ENCODE measurements at regions of chr5 and their contacts with region 1.

Region 1: GRCh38 chr5:131514316-131515283 is 120.4 kb downstream of the RAPGEF6 start:
- DNase-seq: peak; percentile 36
- H3K4me3 Mint-ChIP-seq: peak overlapping the region; percentile 67
- H3K27ac Mint-ChIP-seq: peak overlapping the region; percentile 74
- H3K4me1 Mint-ChIP-seq: peaks cover 37% of the 10 kb centered on the region
- H3K27me3 Mint-ChIP-seq: no peaks in the 10 kb centered on the region

Region 2: GRCh38 chr5:130666462-130666861 is 848.1 kb before region 1 on chr5:
- CTCF ChIA-PET with region 1: no interaction called
- POLR2A ChIA-PET with region 1: no interaction called
- DNase-seq: no peak
- H3K4me3 Mint-ChIP-seq: no peak overlapping the region
- H3K27ac Mint-ChIP-seq: no peak overlapping the region
- H3K4me1 Mint-ChIP-seq: no peaks in the 10 kb centered on the region
- H3K27me3 Mint-ChIP-seq: no peaks in the 10 kb centered on the region

Region 3: DNA sequence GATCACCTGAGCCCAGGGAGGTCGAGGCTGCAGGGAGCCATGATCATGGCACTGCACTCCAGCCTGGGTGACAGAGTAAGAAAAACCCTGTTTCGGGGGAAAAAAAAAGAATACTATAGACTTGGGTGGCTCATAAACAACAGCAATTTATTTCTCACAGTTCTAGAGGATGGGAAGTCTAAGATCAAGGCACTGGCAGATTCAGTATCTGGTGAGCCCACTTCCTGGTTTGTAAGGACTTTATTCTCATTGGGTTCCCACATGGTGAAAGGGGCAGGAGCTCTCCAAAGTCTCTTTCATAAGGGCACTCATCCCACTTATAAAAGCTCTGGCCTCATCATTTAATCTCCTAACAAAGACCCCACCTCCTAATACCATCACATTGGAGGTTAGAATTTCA is 358.2 kb before region 1 on chr5:
- CTCF ChIA-PET with region 1: no interaction called
- POLR2A ChIA-PET with region 1: no interaction called
- DNase-seq: no peak
- H3K4me3 Mint-ChIP-seq: no peak overlapping the region
- H3K27ac Mint-ChIP-seq: no peak overlapping the region
- H3K4me1 Mint-ChIP-seq: peaks cover 25% of the 10 kb centered on the region
- H3K27me3 Mint-ChIP-seq: no peaks in the 10 kb centered on the region

Region 4: DNA sequence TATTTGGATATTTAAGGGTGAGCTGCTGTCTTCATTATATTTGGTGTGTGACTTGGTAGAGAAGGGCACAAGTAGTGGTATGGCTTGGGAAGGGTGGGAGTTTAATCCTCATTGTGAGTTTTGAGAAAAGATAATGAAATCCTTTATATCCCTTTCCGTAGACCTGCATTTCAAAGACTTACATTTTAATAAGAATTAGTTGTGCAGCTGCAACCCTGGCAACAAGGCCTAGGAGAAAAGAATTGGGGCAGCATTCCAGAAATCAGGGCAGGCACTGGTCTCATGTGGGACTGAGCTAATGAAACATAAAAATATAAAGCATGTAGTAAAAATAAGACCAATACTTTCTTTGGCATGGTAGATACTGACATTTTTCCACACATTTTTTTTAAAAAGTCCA is 190.3 kb before region 1 on chr5:
- CTCF ChIA-PET with region 1: no interaction called
- POLR2A ChIA-PET with region 1: no interaction called
- DNase-seq: no peak
- H3K4me3 Mint-ChIP-seq: no peak overlapping the region
- H3K27ac Mint-ChIP-seq: no peak overlapping the region
- H3K4me1 Mint-ChIP-seq: peaks cover 78% of the 10 kb centered on the region
- H3K27me3 Mint-ChIP-seq: no peaks in the 10 kb centered on the region

Region 5: GRCh38 chr5:131528682-131529081 is 14.1 kb after region 1 on chr5:
- CTCF ChIA-PET with region 1: interaction called, 5 read pairs
- POLR2A ChIA-PET with region 1: interaction called, 20 read pairs
- DNase-seq: no peak
- H3K4me3 Mint-ChIP-seq: no peak overlapping the region
- H3K27ac Mint-ChIP-seq: peak overlapping the region; percentile 71
- H3K4me1 Mint-ChIP-seq: peaks cover 65% of the 10 kb centered on the region
- H3K27me3 Mint-ChIP-seq: no peaks in the 10 kb centered on the region

Region 6: GRCh38 chr5:131533836-131534235 is 19.2 kb after region 1 on chr5:
- CTCF ChIA-PET with region 1: interaction called, 3 read pairs
- POLR2A ChIA-PET with region 1: interaction called, 20 read pairs
- DNase-seq: no peak
- H3K4me3 Mint-ChIP-seq: no peak overlapping the region
- H3K27ac Mint-ChIP-seq: peak overlapping the region; percentile 4
- H3K4me1 Mint-ChIP-seq: peaks cover 75% of the 10 kb centered on the region
- H3K27me3 Mint-ChIP-seq: no peaks in the 10 kb centered on the region